Mammary epithelial cell (primary cell): ENCODE measurements at regions of chr12 and their contacts with region 1.

Region 1: GRCh38 chr12:116703214-116703795 is 34.6 kb downstream of the SPRING1 start:
- DNase-seq: peak; percentile 41
- H3K4me3 ChIP-seq: no peak overlapping the region
- H3K27ac ChIP-seq: no peak overlapping the region
- H3K4me1 ChIP-seq: no peaks in the 10 kb centered on the region
- H3K27me3 ChIP-seq: no peaks in the 10 kb centered on the region
- CTCF ChIP-seq: peak; percentile 92 to 96

Region 2: GRCh38 chr12:115998119-115998633 is 705.1 kb before region 1 on chr12:
- CTCF ChIA-PET with region 1: no interaction called
- dilution Hi-C with region 1: no loop called
- in situ Hi-C with region 1: loop called in 1 of 2 experiments (anchors 25 kb)
- intact Hi-C with region 1: loop called (anchors 2 kb)
- DNase-seq: peak; percentile 12
- H3K4me3 ChIP-seq: no peak overlapping the region
- H3K27ac ChIP-seq: no peak overlapping the region
- H3K4me1 ChIP-seq: no peaks in the 10 kb centered on the region
- H3K27me3 ChIP-seq: no peaks in the 10 kb centered on the region
- CTCF ChIP-seq: peak; percentile 60 to 70

Region 3: DNA sequence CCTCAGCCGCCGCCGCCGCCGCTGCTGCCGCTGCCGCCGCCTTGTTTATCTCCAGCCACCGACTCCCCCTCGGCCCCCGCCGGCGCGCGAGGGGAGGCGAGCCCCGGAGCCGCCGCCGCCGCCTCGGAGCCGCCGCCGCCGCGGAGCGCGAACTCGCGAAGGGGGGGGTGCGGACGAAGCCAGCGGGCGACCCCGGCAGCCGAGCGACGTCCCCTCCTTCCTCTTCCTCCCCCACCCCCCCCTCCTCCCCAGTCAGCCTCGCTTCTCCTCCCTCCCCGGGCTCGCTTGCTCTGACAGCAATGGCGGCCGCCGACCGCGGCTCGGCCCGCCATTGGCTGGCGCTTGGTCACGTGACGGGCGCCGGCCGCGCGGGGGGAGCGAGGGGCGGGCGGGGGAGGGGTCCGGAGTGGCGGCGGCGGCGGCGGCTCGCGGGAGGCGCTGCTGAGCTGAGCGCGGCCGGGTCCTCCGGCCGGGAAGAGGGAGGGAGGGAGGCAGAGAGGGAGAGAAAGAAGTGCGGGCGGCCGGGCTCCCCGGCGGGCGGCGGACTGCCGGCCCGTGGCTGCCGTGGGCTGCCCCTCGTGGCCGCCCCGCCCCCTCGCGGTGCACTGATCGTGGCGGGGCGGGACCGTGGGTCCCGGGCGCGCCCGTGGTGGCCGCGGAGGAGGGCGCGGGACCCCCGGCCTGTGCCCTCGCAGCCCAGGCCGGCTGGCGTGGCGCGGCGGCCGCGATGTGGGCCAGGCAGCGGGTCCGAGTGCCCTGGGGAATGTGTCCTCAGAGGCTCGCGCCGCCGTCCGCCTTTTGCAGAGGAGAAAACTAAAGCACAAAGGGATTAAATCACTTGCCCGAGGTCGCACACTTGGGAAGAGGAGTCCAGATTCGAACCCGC is 425.7 kb before region 1 on chr12 and contains the start of gene MED13L:
- CTCF ChIA-PET with region 1: no interaction called
- dilution Hi-C with region 1: no loop called
- in situ Hi-C with region 1: no loop called
- intact Hi-C with region 1: loop called (anchors 10 kb)
- DNase-seq: peak; percentile 83
- H3K4me3 ChIP-seq: peak within 1 kb of the TSS; percentile 72 to 91 (median 89)
- H3K27ac ChIP-seq: peak within 1 kb of the TSS; percentile 65
- H3K4me1 ChIP-seq: peaks cover 4% of the 10 kb centered on the region
- H3K27me3 ChIP-seq: no peaks in the 10 kb centered on the region
- CTCF ChIP-seq: peak in 1 of 2 donors; percentile 35
- total RNA-seq, gene MED13L: 85.6 to 140 TPM

Region 4: DNA sequence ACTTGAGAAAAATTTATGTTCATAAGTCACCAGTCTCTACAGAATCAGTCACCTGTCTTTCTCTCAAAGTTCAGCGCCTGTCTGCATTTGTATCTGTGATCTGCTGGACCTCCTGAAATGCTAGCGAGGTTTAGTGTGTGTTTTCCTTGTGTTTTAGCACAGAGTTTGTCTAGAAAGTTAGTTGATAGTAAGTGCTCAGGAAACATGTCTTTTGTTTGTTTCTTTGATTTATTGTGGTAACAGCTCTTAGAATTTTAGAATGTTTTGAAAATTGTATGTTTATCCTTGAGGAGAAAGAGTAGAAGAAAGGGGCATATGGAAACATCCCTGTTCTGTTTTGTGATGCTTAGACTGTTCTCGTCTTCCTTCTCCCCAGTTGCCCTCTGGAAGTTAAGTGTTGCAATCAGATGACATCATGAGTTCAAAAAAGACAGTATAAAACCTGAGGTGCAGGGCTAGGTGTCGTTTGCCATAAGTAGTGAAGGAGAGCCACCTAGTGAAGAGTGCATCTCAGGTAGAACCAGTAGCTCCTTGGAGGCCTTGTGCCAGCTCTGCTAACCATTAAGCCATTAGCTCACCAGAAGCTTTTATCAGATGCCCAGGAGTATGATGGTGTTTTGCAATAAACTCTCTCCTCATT is 252.2 kb after region 1 on chr12:
- CTCF ChIA-PET with region 1: interaction called, 4 read pairs
- dilution Hi-C with region 1: no loop called
- in situ Hi-C with region 1: no loop called
- intact Hi-C with region 1: loop called (anchors 1 kb)
- DNase-seq: peak; percentile 81
- H3K4me3 ChIP-seq: no peak overlapping the region
- H3K27ac ChIP-seq: no peak overlapping the region
- H3K4me1 ChIP-seq: no peaks in the 10 kb centered on the region
- H3K27me3 ChIP-seq: no peaks in the 10 kb centered on the region
- CTCF ChIP-seq: peak; percentile 37 to 57

Region 5: GRCh38 chr12:117119592-117120198 is 416.4 kb after region 1 on chr12:
- CTCF ChIA-PET with region 1: no interaction called
- dilution Hi-C with region 1: no loop called
- in situ Hi-C with region 1: loop called in 1 of 2 experiments (anchors 10 kb)
- intact Hi-C with region 1: loop called (anchors 1 kb)
- DNase-seq: no peak
- H3K4me3 ChIP-seq: no peak overlapping the region
- H3K27ac ChIP-seq: no peak overlapping the region
- H3K4me1 ChIP-seq: no peaks in the 10 kb centered on the region
- H3K27me3 ChIP-seq: no peaks in the 10 kb centered on the region
- CTCF ChIP-seq: peak; percentile 53 to 69